Activated T-helper 2 cell treated with anti-CD3 and anti-CD28 coated beads, Interferon-gamma antibody, Interleukin-2, Interleukin-4, amounts not matched to agents 10 μg/mL and 5 μg/mL and 100 μg/mL, durations not matched to agents 14 hours and 24 hours and 36 hours (primary cell): ENCODE measurements at regions of chr13 and their contacts with region 1.

Region 1: DNA sequence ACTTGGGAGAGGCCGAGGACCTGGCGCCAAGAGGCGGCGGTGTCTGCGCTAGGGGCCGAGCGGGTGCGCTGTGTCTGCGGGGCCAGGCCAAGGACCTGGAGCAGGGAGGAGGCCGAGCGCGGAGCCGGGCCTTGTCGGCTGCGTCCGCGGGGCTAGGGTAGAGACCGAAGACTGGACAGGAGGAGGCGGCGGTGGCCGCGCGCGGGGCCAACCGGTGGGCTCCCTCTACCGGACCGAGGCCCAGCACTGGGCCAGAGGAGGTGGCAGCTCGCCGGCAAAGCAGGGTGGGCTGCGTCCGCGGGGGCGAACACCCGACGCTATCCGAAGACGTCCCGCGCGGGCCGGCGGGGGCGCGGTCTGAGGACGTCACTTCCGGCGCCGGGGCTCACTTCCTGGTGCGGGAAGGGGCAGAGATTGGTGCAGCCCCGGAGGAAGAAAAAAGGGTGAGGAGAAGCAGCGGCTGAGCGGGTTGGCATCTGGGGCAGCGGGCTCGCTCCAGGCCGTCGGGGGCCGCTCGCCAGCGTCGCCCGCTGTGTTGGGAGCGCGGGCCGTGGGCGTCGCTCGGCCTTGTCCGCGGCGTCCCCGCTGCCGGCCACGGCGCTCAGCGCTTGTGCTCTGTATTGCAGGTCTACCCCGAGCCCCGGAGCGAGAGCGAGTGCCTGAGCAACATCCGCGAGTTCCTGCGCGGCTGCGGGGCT is 38.3 kb downstream of the ARHGEF7 start:
- DNase-seq: peak; percentile 91
- H3K4me3 Mint-ChIP-seq: peak overlapping the region; percentile 91
- H3K27ac Mint-ChIP-seq: peak overlapping the region; percentile 95
- H3K4me1 Mint-ChIP-seq: peaks cover 25% of the 10 kb centered on the region
- H3K27me3 Mint-ChIP-seq: peaks cover 30% of the 10 kb centered on the region

Region 2: GRCh38 chr13:111076156-111077013 is 77.0 kb before region 1 on chr13:
- intact Hi-C with region 1: no loop called
- DNase-seq: no peak
- H3K4me3 Mint-ChIP-seq: no peak overlapping the region
- H3K27ac Mint-ChIP-seq: no peak overlapping the region
- H3K4me1 Mint-ChIP-seq: no peaks in the 10 kb centered on the region
- H3K27me3 Mint-ChIP-seq: peaks cover 5% of the 10 kb centered on the region

Region 3: GRCh38 chr13:111111376-111111937 is 42.0 kb before region 1 on chr13:
- intact Hi-C with region 1: no loop called
- DNase-seq: no peak
- H3K4me3 Mint-ChIP-seq: no peak overlapping the region
- H3K27ac Mint-ChIP-seq: no peak overlapping the region
- H3K4me1 Mint-ChIP-seq: peaks cover 13% of the 10 kb centered on the region
- H3K27me3 Mint-ChIP-seq: peaks cover 64% of the 10 kb centered on the region

Region 4: GRCh38 chr13:111219280-111219679 is 65.9 kb after region 1 on chr13:
- intact Hi-C with region 1: loop called (anchors 1 kb)
- DNase-seq: no peak
- H3K4me3 Mint-ChIP-seq: no peak overlapping the region
- H3K27ac Mint-ChIP-seq: peak overlapping the region; percentile 30
- H3K4me1 Mint-ChIP-seq: peaks cover 16% of the 10 kb centered on the region
- H3K27me3 Mint-ChIP-seq: no peaks in the 10 kb centered on the region